ENCODE measurements at regions of chr11 and their contacts with region 1.

Region 1: GRCh38 chr11:131889146-131889577 is 518.7 kb downstream of the NTM start:
- DNase-seq: peak; percentile 66
- ATAC-seq: peak; percentile 52
- H3K4me3 ChIP-seq: no peak overlapping the region
- H3K27ac ChIP-seq: peak overlapping the region; percentile 87
- H3K4me1 ChIP-seq: peaks cover 46% of the 10 kb centered on the region
- H3K27me3 ChIP-seq: no peaks in the 10 kb centered on the region
- CTCF ChIP-seq: no peak

Region 2: GRCh38 chr11:131423715-131424114 is 465.4 kb before region 1 on chr11:
- CTCF ChIA-PET with region 1: no interaction called
- POLR2A ChIA-PET with region 1: no interaction called
- intact Hi-C with region 1: no loop called
- DNase-seq: peak; percentile 62
- ATAC-seq: 0 out of 2 replicates have a peak, but pooled peaks have one; percentile 20
- H3K4me3 ChIP-seq: no peak overlapping the region
- H3K27ac ChIP-seq: no peak overlapping the region
- H3K4me1 ChIP-seq: no peaks in the 10 kb centered on the region
- H3K27me3 ChIP-seq: peaks cover 35% of the 10 kb centered on the region
- CTCF ChIP-seq: no peak

Region 3: GRCh38 chr11:132064987-132065620 is 175.9 kb after region 1 on chr11:
- CTCF ChIA-PET with region 1: no interaction called
- POLR2A ChIA-PET with region 1: no interaction called
- intact Hi-C with region 1: loop called (anchors 2 kb)
- DNase-seq: peak; percentile 79
- ATAC-seq: peak; percentile 72
- H3K4me3 ChIP-seq: no peak overlapping the region
- H3K27ac ChIP-seq: peak overlapping the region; percentile 34
- H3K4me1 ChIP-seq: peaks cover 22% of the 10 kb centered on the region
- H3K27me3 ChIP-seq: no peaks in the 10 kb centered on the region
- CTCF ChIP-seq: no peak